HepG2 (cell line): ENCODE measurements at regions of chr19 and their contacts with region 1.

Region 1: GRCh38 chr19:12983542-12984142 is 11.6 kb upstream of the NFIX start:
- DNase-seq: peak; percentile 53
- ATAC-seq: peak; percentile 8; the same call in 1 of the 3 replicates
- H3K4me3 ChIP-seq: peak overlapping the region in 2 of 3 experiments; percentile 38 to 47; a peak in 1 of 6 replicates
- H3K27ac ChIP-seq: no peak overlapping the region
- H3K4me1 ChIP-seq: peaks cover 60% of the 10 kb centered on the region
- H3K27me3 ChIP-seq: peaks cover 0 to 5% of the 10 kb centered on the region in 2 experiments; a peak in 1 of 5 replicates
- CTCF ChIP-seq: peak; percentile 91
- EP300 ChIP-seq: peak; percentile 35 to 41; a peak in 2 of 4 replicates
- POLR2A ChIP-seq: no peak
- RAD21 ChIP-seq: peak; percentile 97

Region 2: GRCh38 chr19:12782229-12783028 is 201.2 kb before region 1 on chr19:
- CTCF ChIA-PET with region 1: no interaction called
- POLR2A ChIA-PET with region 1: no interaction called
- in situ Hi-C with region 1: no loop called
- intact Hi-C with region 1: no loop called
- DNase-seq: no peak
- ATAC-seq: no peak
- H3K4me3 ChIP-seq: peak overlapping the region; percentile 25 to 73 (median 65)
- H3K27ac ChIP-seq: no peak overlapping the region
- H3K4me1 ChIP-seq: peaks cover 81% of the 10 kb centered on the region
- H3K27me3 ChIP-seq: no peaks in the 10 kb centered on the region; a peak in 3 of 5 replicates
- CTCF ChIP-seq: peak; percentile 40; the same call in 1 of the 2 replicates
- EP300 ChIP-seq: no peak
- POLR2A ChIP-seq: no peak
- RAD21 ChIP-seq: no peak

Region 3: GRCh38 chr19:12995596-12996405 is 12.2 kb after region 1 on chr19:
- CTCF ChIA-PET with region 1: no interaction called
- POLR2A ChIA-PET with region 1: interaction called, 13 read pairs
- in situ Hi-C with region 1: no loop called
- intact Hi-C with region 1: no loop called
- DNase-seq: no peak
- ATAC-seq: peak; percentile 43
- H3K4me3 ChIP-seq: peak overlapping the region; percentile 79 to 96 (median 85); a peak in 5 of 6 replicates
- H3K27ac ChIP-seq: peak overlapping the region; percentile 58
- H3K4me1 ChIP-seq: peaks cover 32% of the 10 kb centered on the region
- H3K27me3 ChIP-seq: no peaks in the 10 kb centered on the region
- CTCF ChIP-seq: peak; percentile 22; the same call in 1 of the 2 replicates
- EP300 ChIP-seq: no peak
- POLR2A ChIP-seq: no peak
- RAD21 ChIP-seq: no peak

Region 4: GRCh38 chr19:13007292-13008045 is 23.8 kb after region 1 on chr19:
- CTCF ChIA-PET with region 1: no interaction called
- POLR2A ChIA-PET with region 1: interaction called, 11 read pairs
- in situ Hi-C with region 1: no loop called
- intact Hi-C with region 1: no loop called
- DNase-seq: no peak
- ATAC-seq: no peak
- H3K4me3 ChIP-seq: no peak overlapping the region
- H3K27ac ChIP-seq: no peak overlapping the region
- H3K4me1 ChIP-seq: peaks cover 14% of the 10 kb centered on the region
- H3K27me3 ChIP-seq: no peaks in the 10 kb centered on the region; a peak in 1 of 5 replicates
- CTCF ChIP-seq: no peak
- EP300 ChIP-seq: no peak
- POLR2A ChIP-seq: no peak
- RAD21 ChIP-seq: no peak

Region 5: GRCh38 chr19:13022859-13023636 is 39.4 kb after region 1 on chr19:
- CTCF ChIA-PET with region 1: no interaction called
- POLR2A ChIA-PET with region 1: interaction called, 9 read pairs
- in situ Hi-C with region 1: loop called (anchors 5 kb)
- intact Hi-C with region 1: no loop called
- DNase-seq: peak; percentile 79
- ATAC-seq: peak; percentile 82
- H3K4me3 ChIP-seq: peak overlapping the region; percentile 52 to 71 (median 62)
- H3K27ac ChIP-seq: peak overlapping the region; percentile 73
- H3K4me1 ChIP-seq: peaks cover 83% of the 10 kb centered on the region
- H3K27me3 ChIP-seq: no peaks in the 10 kb centered on the region
- CTCF ChIP-seq: no peak
- EP300 ChIP-seq: no peak
- POLR2A ChIP-seq: no peak
- RAD21 ChIP-seq: no peak

Region 6: DNA sequence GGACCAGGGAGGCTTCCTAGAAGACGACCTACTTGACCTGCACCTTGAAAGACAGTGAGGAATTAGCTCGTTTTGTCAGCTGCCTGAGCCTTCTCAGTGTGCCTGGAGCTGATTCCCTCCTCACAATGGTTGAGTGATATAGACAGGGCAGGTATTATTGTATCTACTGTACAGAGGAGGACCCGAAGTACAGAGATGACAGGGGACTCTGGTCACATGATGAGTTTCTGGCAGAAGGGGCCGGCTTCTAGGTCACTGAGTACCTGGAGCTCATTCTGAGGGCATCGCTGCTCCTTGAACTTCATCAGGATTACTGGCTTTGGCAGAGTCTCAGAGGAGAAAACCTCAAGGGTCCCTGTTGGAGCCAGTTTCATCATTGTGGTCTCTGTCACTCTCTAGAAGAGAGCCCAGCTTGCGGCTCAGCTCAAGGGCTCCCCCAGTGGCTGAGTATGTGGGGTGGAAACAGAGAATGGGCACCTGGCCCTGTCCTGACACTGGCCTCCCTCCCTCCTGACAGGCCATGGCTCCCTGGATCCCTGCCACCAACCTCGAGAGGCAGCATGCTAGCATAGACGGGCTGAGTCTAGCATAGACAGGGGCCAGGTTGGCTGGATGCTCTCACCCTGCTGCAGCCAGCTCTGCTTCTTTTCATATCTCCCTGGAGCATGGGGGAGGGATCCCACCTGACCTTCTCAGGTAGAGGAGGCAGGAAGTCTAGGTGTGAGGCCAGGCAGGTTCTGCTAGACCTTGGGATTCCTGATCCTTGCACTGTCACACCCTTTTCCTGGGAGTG is 50.4 kb after region 1 on chr19:
- CTCF ChIA-PET with region 1: interaction called, 4 read pairs
- POLR2A ChIA-PET with region 1: interaction called, 36 read pairs
- in situ Hi-C with region 1: no loop called
- intact Hi-C with region 1: loop called (anchors 2 kb)
- DNase-seq: peak; percentile 55
- ATAC-seq: peak; percentile 81
- H3K4me3 ChIP-seq: no peak overlapping the region
- H3K27ac ChIP-seq: no peak overlapping the region
- H3K4me1 ChIP-seq: peaks cover 79% of the 10 kb centered on the region
- H3K27me3 ChIP-seq: no peaks in the 10 kb centered on the region
- CTCF ChIP-seq: peak; percentile 78
- EP300 ChIP-seq: no peak
- POLR2A ChIP-seq: no peak
- RAD21 ChIP-seq: peak; percentile 82

Region 7: GRCh38 chr19:13051267-13052165 is 67.9 kb after region 1 on chr19:
- CTCF ChIA-PET with region 1: no interaction called
- POLR2A ChIA-PET with region 1: interaction called, 48 read pairs
- in situ Hi-C with region 1: no loop called
- intact Hi-C with region 1: no loop called
- DNase-seq: peak; percentile 54
- ATAC-seq: no peak; the same call in 2 of the 3 replicates
- H3K4me3 ChIP-seq: peak overlapping the region in 1 of 3 experiments; percentile 53; a peak in 1 of 6 replicates
- H3K27ac ChIP-seq: no peak overlapping the region
- H3K4me1 ChIP-seq: peaks cover 65% of the 10 kb centered on the region
- H3K27me3 ChIP-seq: no peaks in the 10 kb centered on the region
- CTCF ChIP-seq: no peak; the same call in 1 of the 2 replicates
- EP300 ChIP-seq: peak in 1 of 2 experiments; percentile 85; a peak in 2 of 4 replicates
- POLR2A ChIP-seq: no peak
- RAD21 ChIP-seq: peak; percentile 19; the same call in 1 of the 2 replicates

Region 8: DNA sequence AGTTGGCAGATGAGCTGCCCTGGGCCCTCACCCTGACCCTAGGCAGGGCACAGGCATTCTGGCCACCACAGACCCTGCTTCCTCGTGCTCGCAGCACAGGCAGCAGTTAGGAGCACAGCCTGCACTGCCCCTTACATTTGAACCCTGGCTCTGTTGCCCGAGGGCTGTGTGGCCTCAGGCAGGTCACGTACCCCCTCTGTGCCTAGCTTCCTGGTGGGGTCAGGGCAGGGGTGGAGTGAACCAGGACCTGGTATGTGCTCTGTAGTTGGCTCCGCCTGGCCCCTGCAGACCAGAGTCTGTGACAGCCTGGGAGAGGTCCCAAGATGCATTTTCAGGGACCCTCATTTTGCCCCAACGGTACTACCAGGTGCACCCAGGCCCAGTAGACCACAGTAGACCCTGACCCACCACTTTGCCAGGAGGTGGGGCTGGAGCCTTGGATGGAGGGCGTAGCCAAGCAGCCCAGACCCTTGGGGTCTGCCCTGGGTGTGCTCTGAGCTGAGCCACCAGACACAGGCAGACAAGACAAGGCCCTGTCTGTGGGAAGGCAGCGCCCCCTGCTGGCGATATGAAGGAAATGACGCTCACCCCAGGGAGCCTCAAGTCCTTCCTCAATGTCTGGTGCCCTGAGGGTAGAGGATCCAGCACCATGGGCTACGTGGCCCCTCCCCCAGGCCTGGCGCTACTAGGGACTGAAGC is 109.9 kb after region 1 on chr19:
- CTCF ChIA-PET with region 1: interaction called, 44 read pairs
- POLR2A ChIA-PET with region 1: interaction called, 3 read pairs
- in situ Hi-C with region 1: loop called (anchors 5 kb)
- intact Hi-C with region 1: loop called (anchors 1 kb)
- DNase-seq: peak; percentile 76
- ATAC-seq: peak; percentile 70
- H3K4me3 ChIP-seq: no peak overlapping the region
- H3K27ac ChIP-seq: no peak overlapping the region
- H3K4me1 ChIP-seq: peaks cover 50% of the 10 kb centered on the region
- H3K27me3 ChIP-seq: no peaks in the 10 kb centered on the region
- CTCF ChIP-seq: peak; percentile 98
- EP300 ChIP-seq: no peak
- POLR2A ChIP-seq: 0 out of 4 replicates have a peak, but pooled peaks of 1 of the 2 experiments have one; percentile 11
- RAD21 ChIP-seq: peak; percentile 93